ENCODE measurements at regions of chr3 and their contacts with region 1.

Region 1: DNA sequence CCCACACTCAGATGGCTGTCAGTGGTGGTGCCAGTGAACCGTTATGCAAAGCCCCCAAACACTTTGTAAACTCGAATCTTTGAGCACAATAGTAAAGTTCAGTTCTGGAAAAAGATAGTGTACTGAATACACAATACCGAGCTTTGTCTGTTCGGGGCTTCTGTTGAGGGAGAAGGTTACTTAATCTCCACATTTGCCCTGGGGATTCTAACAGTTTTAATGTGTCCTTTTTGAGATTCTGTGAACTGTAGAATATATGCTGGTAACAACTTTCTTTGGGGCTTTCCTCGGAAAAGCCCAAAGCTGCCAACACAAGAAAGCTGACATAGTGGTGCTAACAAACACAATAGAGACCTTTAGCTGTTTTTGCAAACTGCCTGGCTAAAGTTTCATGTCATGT is 686.5 kb downstream of the ROBO1 start:
- DNase-seq: no peak
- H3K4me3 ChIP-seq: no peak overlapping the region
- H3K27ac ChIP-seq: no peak overlapping the region
- H3K4me1 ChIP-seq: no peaks in the 10 kb centered on the region
- H3K27me3 ChIP-seq: no peaks in the 10 kb centered on the region
- CTCF ChIP-seq: no peak
- POLR2A ChIP-seq: no peak

Region 2: GRCh38 chr3:78895528-78895927 is 185.8 kb before region 1 on chr3:
- CTCF ChIA-PET with region 1: no interaction called
- POLR2A ChIA-PET with region 1: no interaction called
- dilution Hi-C with region 1: no loop called
- intact Hi-C with region 1: no loop called
- DNase-seq: no peak
- H3K4me3 ChIP-seq: no peak overlapping the region
- H3K27ac ChIP-seq: no peak overlapping the region
- H3K4me1 ChIP-seq: no peaks in the 10 kb centered on the region
- H3K27me3 ChIP-seq: no peaks in the 10 kb centered on the region
- CTCF ChIP-seq: no peak
- POLR2A ChIP-seq: no peak

Region 3: DNA sequence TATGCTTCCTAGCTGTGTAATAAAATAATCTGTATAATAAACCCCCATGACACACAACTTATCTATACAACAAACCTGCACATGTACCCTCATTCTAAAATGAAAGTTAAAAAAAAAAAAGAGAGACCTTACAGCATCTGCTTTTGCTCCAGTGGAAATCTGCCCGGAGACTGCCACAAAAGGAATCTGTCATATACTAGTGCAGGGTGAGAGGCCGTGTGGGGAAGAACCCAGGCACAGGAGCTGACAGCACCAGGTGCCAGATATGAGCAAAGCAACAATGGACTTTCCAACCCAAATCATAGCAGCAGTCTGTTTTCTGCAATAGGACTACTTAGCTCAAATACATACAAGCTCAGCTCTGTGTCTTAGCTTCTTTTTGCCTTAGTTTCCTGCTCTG is 339.9 kb after region 1 on chr3:
- CTCF ChIA-PET with region 1: no interaction called
- POLR2A ChIA-PET with region 1: no interaction called
- dilution Hi-C with region 1: no loop called
- intact Hi-C with region 1: loop called (anchors 5 kb)
- DNase-seq: no peak
- H3K4me3 ChIP-seq: no peak overlapping the region
- H3K27ac ChIP-seq: no peak overlapping the region
- H3K4me1 ChIP-seq: no peaks in the 10 kb centered on the region
- H3K27me3 ChIP-seq: no peaks in the 10 kb centered on the region
- CTCF ChIP-seq: no peak
- POLR2A ChIP-seq: no peak

Measured in endothelial cell of umbilical vein (primary cell).